ENCODE measurements at regions of chr17 and their contacts with region 1.

Region 1: DNA sequence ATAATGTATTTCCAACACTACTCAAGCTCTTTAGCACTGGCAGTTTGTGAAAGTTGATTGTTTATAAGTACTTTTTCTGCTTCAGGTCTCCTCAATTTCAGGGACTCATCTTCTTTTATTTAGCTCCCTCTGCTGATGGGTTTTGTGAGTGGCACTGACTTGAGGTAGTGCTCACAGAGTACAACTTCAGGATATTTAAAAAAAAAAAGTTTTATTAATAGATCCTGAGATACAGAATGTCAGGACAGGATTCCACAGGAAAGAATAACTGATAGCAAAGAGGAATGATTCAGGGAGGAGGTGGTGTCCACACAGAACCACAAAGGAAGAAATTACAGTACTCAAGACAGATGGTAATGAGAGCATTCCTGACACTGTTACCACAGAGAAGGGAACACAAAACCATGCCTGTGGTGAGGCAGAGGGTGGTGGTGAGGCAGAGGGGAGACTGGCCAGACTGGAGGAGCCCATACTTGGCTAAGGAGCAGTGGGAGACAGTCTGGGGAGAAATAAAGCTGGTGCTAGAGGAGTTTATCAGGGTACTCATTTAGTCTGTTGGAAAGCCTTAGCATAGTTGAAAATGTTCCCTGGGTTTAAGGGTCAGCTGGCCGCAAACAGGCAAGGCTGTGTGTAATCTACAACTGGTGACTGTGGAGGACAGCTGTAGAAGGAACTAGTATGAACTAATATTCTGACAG is 63.7 kb downstream of the SPAG9 start:
- DNase-seq: peak in 2 of 10 donors; percentile 14 to 57
- H3K4me3 ChIP-seq: peak overlapping the region in 13 of 59 donors; percentile 1 to 40 (median 15)
- H3K27ac ChIP-seq: peak overlapping the region in 58 of 59 donors; percentile 4 to 91 (median 73)
- H3K27me3 ChIP-seq: no peaks in the 10 kb centered on the region
- CTCF ChIP-seq: peak; percentile 51 to 88 (median 76)

Region 2: GRCh38 chr17:51000835-51001638 is 55.9 kb before region 1 on chr17:
- intact Hi-C with region 1: loop called (anchors 1 to 5 kb)
- DNase-seq: peak in 1 of 10 donors; percentile 28
- H3K4me3 ChIP-seq: no peak overlapping the region
- H3K27ac ChIP-seq: peak overlapping the region in 53 of 59 donors; percentile 2 to 87 (median 62)
- H3K27me3 ChIP-seq: no peaks in the 10 kb centered on the region
- CTCF ChIP-seq: peak; percentile 40 to 92 (median 73)

Region 3: DNA sequence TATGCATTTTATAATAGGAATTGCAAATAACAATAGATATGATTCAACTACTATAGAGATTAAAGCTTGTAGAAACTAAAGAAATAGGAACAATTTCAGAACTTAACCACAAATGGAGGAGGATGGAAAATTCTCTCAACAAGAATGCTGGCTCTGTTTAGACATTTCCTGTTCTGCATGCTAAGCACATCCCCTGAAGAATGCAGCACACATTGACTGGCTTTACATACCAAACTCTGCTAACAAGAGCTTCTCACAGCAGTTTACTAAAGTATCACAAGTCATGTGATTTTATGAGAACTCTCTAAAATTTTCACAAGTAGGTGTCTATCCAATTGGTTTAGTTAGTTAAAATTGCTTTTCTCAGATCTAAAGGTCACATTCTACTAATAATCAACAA is 21.5 kb before region 1 on chr17:
- intact Hi-C with region 1: no loop called
- DNase-seq: peak in 1 of 10 donors; percentile 45
- H3K4me3 ChIP-seq: peak overlapping the region in 22 of 59 donors; percentile 1 to 37 (median 12)
- H3K27ac ChIP-seq: peak overlapping the region; percentile 35 to 96 (median 89)
- H3K27me3 ChIP-seq: no peaks in the 10 kb centered on the region
- CTCF ChIP-seq: peak in 1 of 56 donors; percentile 4

Measured in dorsolateral prefrontal cortex (tissue), 120 donors.